Panc1 (cell line): ENCODE measurements at regions of chr16 and their contacts with region 1.

Region 1: GRCh38 chr16:89453501-89454321 is 36.6 kb downstream of the ANKRD11 start:
- DNase-seq: no peak
- ATAC-seq: peak; percentile 69
- H3K4me3 ChIP-seq: no peak overlapping the region
- H3K27ac ChIP-seq: peak overlapping the region; percentile 44; the same call in 1 of the 2 replicates
- H3K4me1 ChIP-seq: peaks cover 35% of the 10 kb centered on the region
- H3K27me3 ChIP-seq: no peaks in the 10 kb centered on the region
- CTCF ChIP-seq: no peak

Region 2: GRCh38 chr16:89613231-89613953 is 159.7 kb after region 1 on chr16 and contains the start of gene DPEP1:
- CTCF ChIA-PET with region 1: interaction called, 14 read pairs
- POLR2A ChIA-PET with region 1: no interaction called
- in situ Hi-C with region 1: no loop called
- intact Hi-C with region 1: no loop called
- DNase-seq: no peak
- ATAC-seq: no peak
- H3K4me3 ChIP-seq: no peak within 1 kb of the TSS
- H3K27ac ChIP-seq: no peak within 1 kb of the TSS
- H3K4me1 ChIP-seq: peaks cover 7% of the 10 kb centered on the region
- H3K27me3 ChIP-seq: no peaks in the 10 kb centered on the region
- CTCF ChIP-seq: no peak
- total RNA-seq, gene DPEP1: 0.18 TPM